PC-3 (cell line): ENCODE measurements at regions of chr13 and their contacts with region 1.

Region 1: DNA sequence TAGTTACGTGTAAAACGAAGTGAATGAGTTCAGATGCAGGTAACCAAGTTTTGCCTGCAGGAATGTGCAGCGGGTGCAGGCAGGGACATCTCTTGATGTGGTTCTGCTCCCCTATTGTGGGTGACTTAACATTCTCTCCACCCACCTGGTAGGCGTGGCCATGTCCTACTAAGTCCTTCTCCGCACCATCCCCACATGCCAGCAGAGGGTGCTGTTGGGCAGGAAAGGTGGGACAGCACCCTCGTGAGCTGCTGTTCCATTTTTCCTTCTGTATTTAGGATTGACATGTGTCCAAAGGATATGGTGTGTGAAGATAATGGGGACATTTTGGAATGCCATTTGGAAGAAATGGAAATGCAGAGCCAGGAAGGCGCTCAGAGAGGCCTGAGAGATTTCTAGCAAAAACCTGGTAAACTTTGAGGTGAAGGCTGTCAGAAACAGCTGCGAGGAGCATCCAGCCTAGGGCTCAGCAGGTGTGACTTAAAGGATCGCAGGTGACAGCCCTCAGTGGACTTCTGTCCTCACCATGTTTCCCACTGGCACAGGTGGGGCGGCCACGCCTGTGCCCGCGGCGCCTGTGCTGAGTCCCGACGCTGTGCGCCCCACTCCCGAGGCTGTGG is 26.2 kb upstream of the MCF2L start:
- DNase-seq: peak; percentile 96
- ATAC-seq: peak; percentile 97
- H3K4me3 ChIP-seq: peak overlapping the region; percentile 70
- H3K27ac ChIP-seq: no peak overlapping the region
- H3K4me1 ChIP-seq: no peaks in the 10 kb centered on the region
- H3K27me3 ChIP-seq: no peaks in the 10 kb centered on the region
- CTCF ChIP-seq: peak; percentile 87

Region 2: DNA sequence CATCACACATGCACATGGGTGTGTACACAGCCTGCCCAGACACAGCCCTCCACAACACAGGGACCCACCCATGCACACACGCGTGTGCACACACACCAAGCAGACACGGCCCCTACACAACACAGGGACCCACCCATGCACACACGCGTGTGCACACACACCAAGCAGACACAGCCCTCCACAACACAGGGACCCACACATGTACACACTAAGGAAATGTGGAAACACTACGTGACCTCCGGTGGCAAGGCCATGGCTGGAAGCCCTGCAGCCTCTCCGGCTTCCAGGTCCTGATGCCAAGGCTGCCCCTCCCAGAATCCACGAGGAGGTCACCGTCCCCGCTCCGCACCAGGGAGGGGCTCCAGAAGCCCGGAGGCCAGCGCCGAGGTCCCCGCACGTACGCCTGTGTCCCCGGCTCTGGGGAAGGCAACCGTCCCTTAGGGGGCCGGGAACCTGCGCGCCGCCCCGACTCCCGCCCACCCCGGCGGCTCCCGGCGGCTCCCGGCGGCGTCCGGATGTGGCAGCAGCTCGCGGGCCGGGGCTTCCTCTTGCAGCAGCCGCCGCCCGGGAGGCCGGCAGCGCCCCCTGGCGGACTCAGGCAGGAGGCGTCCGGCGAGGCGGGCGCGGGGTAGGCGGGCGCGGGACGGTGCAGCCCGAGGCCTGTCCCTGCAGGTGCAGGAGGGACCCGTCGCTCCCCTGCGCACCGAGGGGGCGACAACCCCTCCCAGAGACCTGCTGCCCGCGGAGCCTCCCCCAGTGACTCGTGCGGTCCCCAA is 451.0 kb after region 1 on chr13:
- CTCF ChIA-PET with region 1: no interaction called
- POLR2A ChIA-PET with region 1: no interaction called
- intact Hi-C with region 1: loop called (anchors 2 kb)
- DNase-seq: peak; percentile 77
- ATAC-seq: peak; percentile 98
- H3K4me3 ChIP-seq: peak overlapping the region; percentile 72
- H3K27ac ChIP-seq: no peak overlapping the region
- H3K4me1 ChIP-seq: peaks cover 10% of the 10 kb centered on the region
- H3K27me3 ChIP-seq: no peaks in the 10 kb centered on the region
- CTCF ChIP-seq: peak; percentile 55